ENCODE measurements at regions of chr2 and their contacts with region 1.

Region 1: DNA sequence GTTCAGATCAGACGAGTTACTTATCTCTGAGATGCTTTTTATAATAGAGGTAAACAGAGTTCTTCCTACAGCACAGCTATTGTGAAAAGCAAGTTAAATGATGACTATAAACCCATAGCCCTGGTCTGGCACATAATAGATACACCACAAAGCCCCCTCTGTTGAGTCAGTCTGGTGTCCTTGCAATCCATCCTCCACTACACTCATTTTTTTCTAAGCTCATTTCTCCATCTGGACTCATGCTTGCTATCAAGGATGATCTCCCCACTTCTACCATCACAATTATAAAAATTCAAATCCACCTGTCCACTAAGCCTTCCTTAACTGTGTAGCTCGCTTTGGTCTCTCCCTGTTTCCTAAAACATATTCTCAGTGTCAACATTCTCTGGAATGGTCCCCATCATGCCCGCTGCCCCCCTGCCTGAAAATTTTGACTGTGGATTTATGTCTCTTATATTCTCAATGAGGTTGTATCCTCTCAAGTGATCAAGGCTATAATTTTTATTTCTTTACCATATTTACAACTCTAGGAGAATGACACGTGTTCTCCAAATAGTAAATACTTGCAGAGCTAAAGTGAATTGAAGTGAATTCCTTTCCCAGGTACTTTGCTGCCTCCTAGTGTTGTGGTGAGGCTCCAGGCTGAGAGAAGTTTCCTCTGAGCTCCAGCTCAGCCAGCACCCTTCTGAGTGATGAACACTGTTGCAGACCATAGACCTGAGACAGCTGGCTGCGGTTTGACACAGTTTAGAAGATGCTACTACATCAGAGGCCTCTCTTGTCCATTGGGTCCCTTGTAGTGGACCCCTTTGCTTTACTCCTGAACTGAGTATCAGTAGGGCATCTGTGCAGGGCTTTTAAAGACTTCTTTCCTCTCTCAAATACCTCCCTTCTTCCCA is 108.7 kb downstream of the DPP10 start:
- DNase-seq: no peak
- ATAC-seq: no peak
- H3K4me3 ChIP-seq: no peak overlapping the region
- H3K27ac ChIP-seq: no peak overlapping the region
- H3K4me1 ChIP-seq: no peaks in the 10 kb centered on the region
- H3K27me3 ChIP-seq: peaks cover 0 to 5% (median 0%) of the 10 kb centered on the region in 3 donors
- CTCF ChIP-seq: peak; percentile 48

Region 2: DNA sequence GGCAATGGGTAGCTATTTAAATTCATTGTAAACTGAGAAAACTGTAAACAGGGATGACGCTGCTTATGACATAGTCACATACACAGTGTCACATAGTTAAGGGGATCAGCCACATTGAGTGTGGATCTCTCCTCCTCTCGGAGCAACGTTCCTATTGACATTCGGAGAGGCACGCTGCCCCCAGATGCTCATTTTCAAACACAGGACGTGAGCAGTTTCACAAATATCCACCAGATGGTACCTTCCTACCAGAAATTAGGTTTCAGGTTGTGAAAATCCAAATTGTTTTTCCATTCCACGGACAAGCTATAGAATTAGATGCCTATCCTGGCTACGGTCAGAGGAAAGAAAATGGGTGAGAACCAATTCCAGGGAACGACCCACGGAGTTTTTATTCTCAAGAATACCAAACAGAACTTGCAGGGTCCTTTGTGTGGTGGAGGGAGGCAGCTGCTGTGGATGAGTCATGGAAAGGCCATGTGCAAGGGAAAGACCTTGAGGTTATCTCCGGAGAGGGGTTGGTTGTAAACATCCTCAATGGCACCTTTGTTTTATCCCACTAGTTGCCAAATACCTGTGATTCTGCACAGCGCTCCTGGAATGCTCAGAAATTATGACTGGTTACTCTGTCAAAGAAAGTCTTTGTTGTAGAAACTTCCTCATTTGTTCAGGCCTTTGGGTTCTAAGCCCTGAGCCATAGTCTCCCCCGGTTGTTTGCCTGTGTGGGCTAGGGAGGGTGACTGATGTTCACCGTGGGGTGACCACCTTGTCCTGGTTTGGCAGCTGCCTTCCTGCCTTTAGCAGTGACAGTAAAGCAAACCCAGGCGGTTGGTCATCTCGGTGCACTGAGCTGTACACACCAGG is 573.3 kb before region 1 on chr2:
- intact Hi-C with region 1: loop called in 1 of 2 experiments (anchors 5 kb)
- DNase-seq: no peak
- ATAC-seq: no peak
- H3K4me3 ChIP-seq: no peak overlapping the region
- H3K27ac ChIP-seq: no peak overlapping the region
- H3K4me1 ChIP-seq: no peaks in the 10 kb centered on the region
- H3K27me3 ChIP-seq: no peaks in the 10 kb centered on the region
- CTCF ChIP-seq: peak; percentile 15